CD4-positive, alpha-beta T cell (primary cell): ENCODE measurements at regions of chr15 and their contacts with region 1.

Region 1: DNA sequence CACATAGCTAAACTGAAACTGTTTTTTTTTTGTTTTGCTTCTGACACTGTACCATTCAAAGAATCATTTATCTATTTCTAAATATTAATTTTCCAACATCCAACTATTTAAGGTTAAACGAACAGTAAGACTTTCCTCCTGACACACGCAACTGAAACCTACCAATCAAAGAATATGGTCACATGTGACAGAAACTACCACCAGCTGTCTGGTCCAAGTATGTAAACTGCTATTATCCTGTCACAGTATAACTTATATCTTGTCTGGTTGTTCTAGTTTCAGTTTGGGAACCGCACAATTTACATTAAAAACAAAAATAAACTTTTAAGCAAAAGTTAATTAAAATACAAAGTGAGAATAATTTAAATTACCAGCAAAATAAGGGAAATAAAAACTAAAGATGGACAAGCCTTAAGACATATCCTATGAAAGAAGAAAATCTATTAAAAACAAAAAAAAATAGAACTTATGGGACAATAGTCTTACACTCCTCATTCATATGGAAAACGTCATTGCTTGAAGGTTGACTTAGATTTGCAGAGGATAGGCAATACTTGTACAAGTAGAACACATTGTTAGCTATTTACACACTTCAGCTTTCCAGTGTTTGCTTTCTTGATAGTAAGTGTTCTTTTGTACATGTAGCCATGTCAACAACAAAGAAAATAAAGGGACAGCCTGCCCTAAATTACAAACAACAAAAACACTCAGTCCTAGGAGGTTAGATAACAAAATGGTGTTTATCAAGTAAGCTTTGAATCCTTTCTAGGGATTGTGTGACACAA is 26.8 kb upstream of the CHRM5 start:
- DNase-seq: no peak
- ATAC-seq: no peak
- H3K4me3 ChIP-seq: no peak overlapping the region
- H3K4me3 Mint-ChIP-seq: no peak overlapping the region
- H3K27ac ChIP-seq: no peak overlapping the region
- H3K27ac Mint-ChIP-seq: no peak overlapping the region
- H3K4me1 ChIP-seq: no peaks in the 10 kb centered on the region
- H3K4me1 Mint-ChIP-seq: no peaks in the 10 kb centered on the region
- H3K27me3 ChIP-seq: no peaks in the 10 kb centered on the region
- H3K27me3 Mint-ChIP-seq: no peaks in the 10 kb centered on the region
- CTCF ChIP-seq: no peak

Region 2: DNA sequence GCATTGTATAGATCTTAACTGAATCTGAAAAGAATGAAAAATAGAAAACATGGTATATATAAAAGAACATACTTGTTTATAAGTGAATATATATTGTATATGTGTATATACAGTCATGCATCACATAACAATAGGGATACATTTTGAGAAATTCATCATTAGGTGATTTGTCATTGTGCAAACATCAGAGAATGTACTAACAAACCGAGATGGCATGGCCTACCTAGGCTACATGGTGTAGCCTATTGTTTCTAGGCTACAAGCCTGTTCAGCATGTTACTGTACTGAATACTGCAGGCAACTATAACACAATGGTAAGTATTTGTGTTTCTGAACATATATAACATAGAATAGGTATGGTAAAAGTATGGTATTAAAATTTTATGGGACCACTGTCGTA is 37.8 kb before region 1 on chr15:
- CTCF ChIA-PET with region 1: no interaction called
- POLR2A ChIA-PET with region 1: no interaction called
- intact Hi-C with region 1: loop called in 1 of 2 experiments (anchors 2 kb)
- DNase-seq: no peak
- ATAC-seq: no peak
- H3K4me3 ChIP-seq: no peak overlapping the region
- H3K4me3 Mint-ChIP-seq: no peak overlapping the region
- H3K27ac ChIP-seq: no peak overlapping the region
- H3K27ac Mint-ChIP-seq: no peak overlapping the region
- H3K4me1 ChIP-seq: no peaks in the 10 kb centered on the region
- H3K4me1 Mint-ChIP-seq: no peaks in the 10 kb centered on the region
- H3K27me3 ChIP-seq: no peaks in the 10 kb centered on the region
- H3K27me3 Mint-ChIP-seq: no peaks in the 10 kb centered on the region
- CTCF ChIP-seq: no peak

Region 3: DNA sequence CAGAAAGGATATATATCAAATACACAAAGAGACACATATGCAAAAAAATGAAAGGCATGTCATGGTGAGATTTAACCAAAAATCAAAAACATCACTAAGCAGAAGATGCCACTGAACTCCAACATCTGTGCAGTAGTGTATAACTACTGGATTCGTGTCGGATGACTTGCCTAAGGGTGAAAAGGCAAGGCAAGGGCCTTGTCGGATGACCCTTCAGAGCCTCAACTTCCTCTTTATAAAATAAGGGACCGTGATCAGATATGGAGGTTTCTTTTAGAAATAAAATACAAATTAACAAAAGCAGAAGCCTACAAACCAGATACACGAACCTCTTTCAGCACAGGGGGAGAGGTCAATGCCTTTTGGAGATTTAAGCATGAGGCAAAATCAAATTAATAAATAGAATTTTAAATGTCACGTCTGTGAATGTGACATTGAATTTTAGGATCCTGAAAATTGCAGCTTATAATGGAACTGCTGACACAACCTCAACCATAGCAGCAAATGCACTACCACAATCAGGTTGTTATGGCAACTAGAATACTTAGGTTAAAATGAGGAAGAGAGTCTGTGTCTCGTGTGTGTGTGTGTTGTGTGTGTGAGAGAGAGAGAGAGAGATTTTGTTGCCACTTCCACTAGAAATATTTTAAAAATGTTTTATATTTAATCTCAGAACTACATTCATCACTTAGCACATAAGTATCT is 18.5 kb after region 1 on chr15:
- CTCF ChIA-PET with region 1: no interaction called
- POLR2A ChIA-PET with region 1: no interaction called
- intact Hi-C with region 1: no loop called
- DNase-seq: no peak
- ATAC-seq: no peak
- H3K4me3 ChIP-seq: no peak overlapping the region
- H3K4me3 Mint-ChIP-seq: no peak overlapping the region
- H3K27ac ChIP-seq: no peak overlapping the region
- H3K27ac Mint-ChIP-seq: no peak overlapping the region
- H3K4me1 ChIP-seq: no peaks in the 10 kb centered on the region
- H3K4me1 Mint-ChIP-seq: no peaks in the 10 kb centered on the region
- H3K27me3 ChIP-seq: no peaks in the 10 kb centered on the region
- H3K27me3 Mint-ChIP-seq: no peaks in the 10 kb centered on the region
- CTCF ChIP-seq: no peak